ENCODE measurements at regions of chr2 and their contacts with region 1.

Region 1: GRCh38 chr2:159807183-159808031 is 9.4 kb upstream of the CD302 start:
- DNase-seq: peak; percentile 44 to 58 (median 54)
- H3K4me3 ChIP-seq: no peak overlapping the region
- H3K4me3 Mint-ChIP-seq: no peak overlapping the region
- H3K27ac ChIP-seq: no peak overlapping the region
- H3K27ac Mint-ChIP-seq: no peak overlapping the region
- H3K4me1 ChIP-seq: peaks cover 8 to 19% of the 10 kb centered on the region in 2 donors
- H3K4me1 Mint-ChIP-seq: peaks cover 18% of the 10 kb centered on the region
- H3K27me3 ChIP-seq: no peaks in the 10 kb centered on the region
- H3K27me3 Mint-ChIP-seq: no peaks in the 10 kb centered on the region
- CTCF ChIP-seq: peak; percentile 81

Region 2: DNA sequence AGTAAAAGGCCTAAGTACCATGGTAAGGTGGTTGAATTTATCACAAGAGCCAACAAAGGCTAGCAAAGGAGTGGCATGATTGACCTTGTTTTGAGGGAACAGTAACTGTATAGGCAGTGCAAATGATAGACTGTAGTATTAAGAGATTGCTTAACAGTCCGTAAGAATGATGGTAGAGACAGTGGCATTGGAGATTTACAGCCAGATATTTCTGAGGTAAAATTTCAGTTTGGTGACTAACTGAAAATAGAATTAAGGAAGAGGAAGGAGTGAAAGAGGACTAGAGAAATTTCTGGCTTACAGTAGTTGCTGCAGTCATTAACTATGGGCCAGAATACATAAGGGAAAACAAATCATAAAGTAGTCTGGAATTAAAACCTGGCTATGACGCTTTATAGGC is 186.6 kb before region 1 on chr2:
- intact Hi-C with region 1: no loop called
- DNase-seq: peak in 2 of 3 donors; percentile 10 to 37
- H3K4me3 ChIP-seq: no peak overlapping the region
- H3K4me3 Mint-ChIP-seq: no peak overlapping the region
- H3K27ac ChIP-seq: peak overlapping the region in 1 of 2 donors; percentile 49
- H3K27ac Mint-ChIP-seq: peak overlapping the region in 6 of 7 donors; percentile 9 to 73 (median 34)
- H3K4me1 ChIP-seq: peaks cover 20 to 34% of the 10 kb centered on the region in 2 donors
- H3K4me1 Mint-ChIP-seq: peaks cover 45% of the 10 kb centered on the region
- H3K27me3 ChIP-seq: no peaks in the 10 kb centered on the region
- H3K27me3 Mint-ChIP-seq: no peaks in the 10 kb centered on the region
- CTCF ChIP-seq: no peak

Region 3: GRCh38 chr2:159658881-159659873 is 148.2 kb before region 1 on chr2:
- intact Hi-C with region 1: no loop called
- DNase-seq: peak; percentile 21 to 30 (median 24)
- H3K4me3 ChIP-seq: peak overlapping the region in 1 of 3 experiments; percentile 32
- H3K4me3 Mint-ChIP-seq: peak overlapping the region in 1 of 2 donors; percentile 11
- H3K27ac ChIP-seq: peak overlapping the region in 1 of 2 donors; percentile 39
- H3K27ac Mint-ChIP-seq: peak overlapping the region in 5 of 7 donors; percentile 14 to 54 (median 40)
- H3K4me1 ChIP-seq: peaks cover 16 to 24% of the 10 kb centered on the region in 2 donors
- H3K4me1 Mint-ChIP-seq: peaks cover 30% of the 10 kb centered on the region
- H3K27me3 ChIP-seq: no peaks in the 10 kb centered on the region
- H3K27me3 Mint-ChIP-seq: peaks cover 0 to 2% (median 0%) of the 10 kb centered on the region in 3 donors
- CTCF ChIP-seq: no peak

Region 4: GRCh38 chr2:159755788-159756187 is 51.6 kb before region 1 on chr2:
- intact Hi-C with region 1: loop called in 1 of 2 experiments (anchors 10 kb)
- DNase-seq: peak in 2 of 3 donors; percentile 18 to 33
- H3K4me3 ChIP-seq: no peak overlapping the region
- H3K4me3 Mint-ChIP-seq: no peak overlapping the region
- H3K27ac ChIP-seq: peak overlapping the region in 1 of 2 donors; percentile 77
- H3K27ac Mint-ChIP-seq: no peak overlapping the region
- H3K4me1 ChIP-seq: peaks cover 16 to 17% of the 10 kb centered on the region in 2 donors
- H3K4me1 Mint-ChIP-seq: peaks cover 7% of the 10 kb centered on the region
- H3K27me3 ChIP-seq: no peaks in the 10 kb centered on the region
- H3K27me3 Mint-ChIP-seq: no peaks in the 10 kb centered on the region
- CTCF ChIP-seq: peak; percentile 9